ENCODE measurements at regions of chr2 and their contacts with region 1.

Region 1: DNA sequence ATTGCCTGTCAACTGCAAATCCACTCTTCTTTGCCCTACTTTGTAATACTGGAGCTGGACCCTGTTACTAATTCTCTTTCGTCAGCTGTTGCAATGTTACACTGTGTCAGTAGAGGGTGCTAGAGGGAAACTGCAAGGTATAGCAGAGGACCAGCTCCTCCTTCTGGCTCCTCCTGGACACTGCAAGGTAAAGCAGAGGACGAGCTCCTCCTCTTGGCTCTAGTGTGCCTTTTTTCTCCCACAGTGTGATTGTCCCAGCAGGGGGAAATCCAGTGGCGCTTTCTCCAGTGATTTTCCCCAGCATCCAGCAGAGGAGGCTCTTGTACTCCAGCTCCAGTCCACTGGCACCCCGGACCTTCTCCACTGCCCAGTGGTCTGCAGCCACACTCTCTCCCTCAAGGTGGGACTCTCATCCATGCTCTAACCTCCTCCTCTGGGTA is 95.6 kb downstream of the CAPN13 start:
- DNase-seq: peak; percentile 80
- H3K4me3 Mint-ChIP-seq: no peak overlapping the region
- H3K27ac Mint-ChIP-seq: no peak overlapping the region
- H3K4me1 Mint-ChIP-seq: peaks cover 16% of the 10 kb centered on the region
- H3K27me3 Mint-ChIP-seq: no peaks in the 10 kb centered on the region

Region 2: DNA sequence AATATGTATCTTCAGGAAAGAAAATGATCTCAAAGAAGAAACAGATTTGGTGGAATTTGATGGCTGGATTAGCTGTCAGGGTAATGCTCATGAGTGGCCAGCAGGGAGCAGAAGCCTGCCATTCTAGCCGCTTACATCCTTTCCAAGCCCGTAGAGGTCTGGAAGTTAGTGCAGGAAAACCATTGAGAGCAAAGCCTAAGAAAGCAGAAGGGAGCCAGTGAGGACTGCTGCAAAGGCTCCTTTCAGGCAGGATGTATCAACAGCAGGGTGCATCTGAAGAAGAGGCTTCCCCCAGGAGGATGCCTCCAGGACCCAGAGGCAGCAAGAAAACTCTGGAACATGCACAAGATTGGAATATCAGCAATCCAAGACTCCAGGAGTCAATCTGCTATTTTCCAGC is 503.2 kb before region 1 on chr2:
- intact Hi-C with region 1: loop called (anchors 1 kb)
- DNase-seq: no peak
- H3K4me3 Mint-ChIP-seq: no peak overlapping the region
- H3K27ac Mint-ChIP-seq: no peak overlapping the region
- H3K4me1 Mint-ChIP-seq: peaks cover 22% of the 10 kb centered on the region
- H3K27me3 Mint-ChIP-seq: peaks cover 6% of the 10 kb centered on the region

Region 3: DNA sequence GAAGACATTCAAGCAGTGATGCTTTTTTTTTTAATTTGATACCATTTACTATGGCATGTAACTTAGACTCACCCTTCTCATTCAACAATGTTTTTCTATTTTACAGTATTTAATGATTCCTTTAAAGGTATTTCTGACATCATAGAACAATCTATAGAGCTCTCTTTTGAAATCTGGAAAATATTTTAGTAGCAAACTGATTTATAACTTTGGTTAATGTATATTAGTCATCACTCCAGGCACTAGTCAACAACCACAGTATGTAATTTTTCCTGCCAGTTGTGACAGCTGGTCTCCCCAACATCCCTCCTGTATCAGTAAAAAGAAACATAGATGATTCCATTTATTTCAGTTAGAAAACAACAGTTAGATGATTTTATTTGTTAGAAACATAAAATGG is 141.7 kb before region 1 on chr2:
- intact Hi-C with region 1: no loop called
- DNase-seq: no peak
- H3K4me3 Mint-ChIP-seq: no peak overlapping the region
- H3K27ac Mint-ChIP-seq: no peak overlapping the region
- H3K4me1 Mint-ChIP-seq: peaks cover 13% of the 10 kb centered on the region
- H3K27me3 Mint-ChIP-seq: no peaks in the 10 kb centered on the region

Region 4: GRCh38 chr2:31170071-31170698 is 458.5 kb after region 1 on chr2:
- intact Hi-C with region 1: loop called (anchors 1 kb)
- DNase-seq: peak; percentile 31
- H3K4me3 Mint-ChIP-seq: no peak overlapping the region
- H3K27ac Mint-ChIP-seq: no peak overlapping the region
- H3K4me1 Mint-ChIP-seq: no peaks in the 10 kb centered on the region
- H3K27me3 Mint-ChIP-seq: peaks cover 3% of the 10 kb centered on the region

Region 5: GRCh38 chr2:31333527-31334183 is 622.0 kb after region 1 on chr2:
- intact Hi-C with region 1: loop called (anchors 1 kb)
- DNase-seq: peak; percentile 66
- H3K4me3 Mint-ChIP-seq: no peak overlapping the region
- H3K27ac Mint-ChIP-seq: no peak overlapping the region
- H3K4me1 Mint-ChIP-seq: no peaks in the 10 kb centered on the region
- H3K27me3 Mint-ChIP-seq: peaks cover 26% of the 10 kb centered on the region

Region 6: DNA sequence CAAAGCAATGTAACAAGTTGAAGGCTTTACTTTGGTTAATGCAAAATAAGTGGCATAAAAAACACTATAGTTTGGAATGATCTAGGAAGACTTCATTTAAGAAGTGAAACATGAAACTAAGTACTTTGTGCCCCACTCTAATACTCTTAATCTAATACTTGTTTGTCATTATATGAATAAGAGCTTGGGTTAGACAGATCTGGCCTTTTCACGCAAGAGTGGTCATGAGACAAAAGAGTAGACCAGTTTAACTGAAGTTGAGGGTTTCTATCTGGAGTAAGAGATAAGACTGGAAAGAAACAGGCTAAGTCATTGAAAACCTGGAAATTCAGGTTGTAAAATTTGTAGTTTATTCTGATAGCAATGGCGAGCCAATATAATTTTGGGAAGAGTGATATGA is 1456.8 kb after region 1 on chr2:
- intact Hi-C with region 1: loop called (anchors 5 kb)
- DNase-seq: no peak
- H3K4me3 Mint-ChIP-seq: no peak overlapping the region
- H3K27ac Mint-ChIP-seq: no peak overlapping the region
- H3K4me1 Mint-ChIP-seq: peaks cover 44% of the 10 kb centered on the region
- H3K27me3 Mint-ChIP-seq: no peaks in the 10 kb centered on the region

Measured in activated T-helper 1 cell treated with anti-CD3 and anti-CD28 coated beads, Interleukin-12 subunit alpha, Interleukin-12 subunit beta, Interleukin-2, Interleukin-4 antibody, amounts not matched to agents 30 ng/mL and 10 ng/mL and 1 ng/mL, durations not matched to agents 14 hours and 24 hours and 36 hours (primary cell).